PC-9 (cell line): ENCODE measurements at regions of chr14 and their contacts with region 1.

Region 1: GRCh38 chr14:63852817-63853731 is at the start of gene SYNE2:
- DNase-seq: peak; percentile 52 to 87
- H3K4me3 ChIP-seq: peak within 1 kb of the TSS; percentile 72
- H3K27ac ChIP-seq: no peak within 1 kb of the TSS
- H3K4me1 ChIP-seq: peaks cover 23% of the 10 kb centered on the region
- H3K27me3 ChIP-seq: no peaks in the 10 kb centered on the region
- CTCF ChIP-seq: no peak
- total RNA-seq, gene SYNE2: 90.3 and 94.2 TPM in 2 replicates

Region 2: GRCh38 chr14:63867933-63868921 is 15.2 kb after region 1 on chr14:
- CTCF ChIA-PET with region 1: no interaction called
- POLR2A ChIA-PET with region 1: interaction called, 3 read pairs
- intact Hi-C with region 1: loop called (anchors 1 kb)
- DNase-seq: peak in 1 of 2 experiments; percentile 79
- H3K4me3 ChIP-seq: no peak overlapping the region
- H3K27ac ChIP-seq: peak overlapping the region; percentile 23; the same call in 1 of the 2 replicates
- H3K4me1 ChIP-seq: peaks cover 52% of the 10 kb centered on the region
- H3K27me3 ChIP-seq: no peaks in the 10 kb centered on the region
- CTCF ChIP-seq: no peak

Region 3: DNA sequence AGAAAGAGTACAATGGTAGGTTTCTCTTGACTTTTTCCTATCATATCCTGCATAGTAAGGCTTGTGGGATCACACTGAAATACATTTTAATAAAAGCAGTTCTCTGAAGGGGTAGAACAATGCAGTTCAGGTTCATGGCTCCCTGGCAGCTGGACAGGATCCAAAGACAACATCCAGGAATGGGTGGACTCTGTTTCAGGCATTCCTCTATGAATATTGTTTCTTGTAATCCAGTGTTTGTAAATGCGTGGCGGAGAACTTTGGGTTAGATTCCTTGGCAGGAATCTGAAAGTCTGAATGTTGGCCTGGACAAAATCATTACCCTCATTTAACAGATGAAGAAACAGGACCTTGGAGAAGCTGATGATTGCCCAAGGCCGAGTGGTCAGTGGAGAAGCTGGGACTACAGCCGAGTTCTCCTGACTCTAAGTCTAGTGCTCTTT is 43.2 kb after region 1 on chr14:
- CTCF ChIA-PET with region 1: no interaction called
- POLR2A ChIA-PET with region 1: no interaction called
- intact Hi-C with region 1: loop called (anchors 1 kb)
- DNase-seq: peak; percentile 84 to 86
- H3K4me3 ChIP-seq: no peak overlapping the region
- H3K27ac ChIP-seq: peak overlapping the region; percentile 1
- H3K4me1 ChIP-seq: peaks cover 14% of the 10 kb centered on the region
- H3K27me3 ChIP-seq: no peaks in the 10 kb centered on the region
- CTCF ChIP-seq: no peak

Region 4: DNA sequence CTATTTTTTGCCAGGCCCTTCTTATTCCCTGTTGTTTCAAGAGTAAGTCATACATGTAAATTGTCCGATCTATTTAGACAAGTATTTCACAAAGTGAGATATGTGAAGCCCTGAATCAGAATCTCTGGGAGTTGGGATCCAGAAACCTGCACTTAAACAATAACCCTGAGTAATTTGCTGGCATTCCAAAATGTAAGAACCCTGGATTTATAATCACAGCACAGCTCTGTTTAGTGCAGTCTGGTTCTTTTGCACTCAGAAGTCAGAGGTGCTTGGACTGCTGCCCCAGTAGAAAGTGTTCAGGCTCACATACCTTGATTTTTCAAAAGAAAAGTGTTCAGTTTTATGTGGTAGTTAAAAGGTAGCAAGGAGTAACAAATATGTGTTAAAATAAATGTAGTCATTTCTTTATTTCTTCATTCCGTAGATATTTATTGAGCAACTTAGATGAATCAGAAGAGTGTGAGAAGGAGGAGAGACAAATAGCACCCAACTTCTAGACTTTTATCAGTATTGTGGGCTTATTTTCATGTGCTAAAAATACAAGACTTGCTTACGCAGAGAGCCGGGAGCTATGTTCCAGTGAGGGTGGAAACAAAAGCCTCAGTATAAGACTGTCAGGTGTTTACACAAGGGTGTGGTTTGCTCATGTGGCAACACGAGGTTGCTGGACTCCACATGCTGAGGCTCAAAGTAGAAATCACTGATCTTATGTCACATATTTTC is 69.8 kb after region 1 on chr14:
- CTCF ChIA-PET with region 1: no interaction called
- POLR2A ChIA-PET with region 1: no interaction called
- intact Hi-C with region 1: loop called (anchors 2 kb)
- DNase-seq: peak; percentile 33 to 90
- H3K4me3 ChIP-seq: peak overlapping the region; percentile 10; the same call in 1 of the 2 replicates
- H3K27ac ChIP-seq: peak overlapping the region; percentile 79
- H3K4me1 ChIP-seq: peaks cover 22% of the 10 kb centered on the region
- H3K27me3 ChIP-seq: no peaks in the 10 kb centered on the region
- CTCF ChIP-seq: no peak

Region 5: GRCh38 chr14:63940387-63940786 is 87.3 kb after region 1 on chr14:
- CTCF ChIA-PET with region 1: no interaction called
- POLR2A ChIA-PET with region 1: no interaction called
- intact Hi-C with region 1: loop called (anchors 5 kb)
- DNase-seq: no peak
- H3K4me3 ChIP-seq: no peak overlapping the region
- H3K27ac ChIP-seq: no peak overlapping the region
- H3K4me1 ChIP-seq: no peaks in the 10 kb centered on the region
- H3K27me3 ChIP-seq: no peaks in the 10 kb centered on the region
- CTCF ChIP-seq: no peak